ENCODE measurements at regions of chr2 and their contacts with region 1.

Region 1: DNA sequence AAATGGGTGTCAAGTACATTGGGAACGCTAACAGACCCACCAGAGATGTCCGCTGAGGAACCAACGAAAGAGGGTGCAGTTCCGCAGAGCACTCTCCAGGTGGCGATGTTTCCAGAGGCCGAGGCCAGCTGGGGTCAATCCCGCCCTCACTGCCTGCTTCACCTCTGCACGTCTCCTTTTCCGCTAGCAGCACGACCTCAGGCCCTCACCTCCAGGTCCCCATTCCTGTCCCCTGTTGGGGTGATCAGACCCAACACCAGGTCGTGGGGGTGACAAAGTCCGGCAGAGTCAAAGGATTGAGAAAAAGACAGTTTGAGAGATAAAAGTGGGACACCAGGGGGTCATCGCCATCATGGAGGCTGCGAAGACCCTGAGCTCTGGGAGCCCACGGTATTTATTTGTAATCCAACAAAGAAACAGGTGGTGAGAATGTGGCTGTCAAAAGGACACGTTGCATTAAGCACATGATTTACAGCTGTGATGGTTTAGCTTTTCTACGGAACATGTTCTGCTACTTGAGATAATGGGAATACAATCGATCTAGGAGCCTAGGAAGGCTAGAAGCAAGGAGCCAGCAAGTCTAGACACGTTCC is 27.3 kb downstream of the ZAP70 start:
- DNase-seq: peak in 4 of 9 experiments; percentile 37 to 70 (median 54)
- ATAC-seq: peak; percentile 55
- H3K4me3 ChIP-seq: no peak overlapping the region
- H3K4me3 Mint-ChIP-seq: no peak overlapping the region
- H3K27ac ChIP-seq: peak overlapping the region in 1 of 2 experiments; percentile 68
- H3K27ac Mint-ChIP-seq: peak overlapping the region; percentile 77
- H3K4me1 ChIP-seq: peaks cover 36% of the 10 kb centered on the region
- H3K4me1 Mint-ChIP-seq: peaks cover 59% of the 10 kb centered on the region
- H3K27me3 ChIP-seq: no peaks in the 10 kb centered on the region
- H3K27me3 Mint-ChIP-seq: no peaks in the 10 kb centered on the region
- CTCF ChIP-seq: peak; percentile 61

Region 2: GRCh38 chr2:97645695-97646629 is 94.7 kb before region 1 on chr2 and contains the start of gene COX5B:
- CTCF ChIA-PET with region 1: no interaction called
- POLR2A ChIA-PET with region 1: no interaction called
- intact Hi-C with region 1: loop called in 1 of 2 experiments (anchors 5 kb)
- DNase-seq: peak; percentile 97 to 99 (median 99)
- ATAC-seq: peak; percentile 97
- H3K4me3 ChIP-seq: peak within 1 kb of the TSS; percentile 94 to 97
- H3K4me3 Mint-ChIP-seq: peak within 1 kb of the TSS; percentile 91
- H3K27ac ChIP-seq: peak within 1 kb of the TSS; percentile 83 to 90
- H3K27ac Mint-ChIP-seq: peak within 1 kb of the TSS; percentile 95
- H3K4me1 ChIP-seq: peaks cover 20% of the 10 kb centered on the region
- H3K4me1 Mint-ChIP-seq: peaks cover 20% of the 10 kb centered on the region
- H3K27me3 ChIP-seq: no peaks in the 10 kb centered on the region
- H3K27me3 Mint-ChIP-seq: no peaks in the 10 kb centered on the region
- CTCF ChIP-seq: no peak
- total RNA-seq, gene COX5B: 115 to 117 TPM

Region 3: DNA sequence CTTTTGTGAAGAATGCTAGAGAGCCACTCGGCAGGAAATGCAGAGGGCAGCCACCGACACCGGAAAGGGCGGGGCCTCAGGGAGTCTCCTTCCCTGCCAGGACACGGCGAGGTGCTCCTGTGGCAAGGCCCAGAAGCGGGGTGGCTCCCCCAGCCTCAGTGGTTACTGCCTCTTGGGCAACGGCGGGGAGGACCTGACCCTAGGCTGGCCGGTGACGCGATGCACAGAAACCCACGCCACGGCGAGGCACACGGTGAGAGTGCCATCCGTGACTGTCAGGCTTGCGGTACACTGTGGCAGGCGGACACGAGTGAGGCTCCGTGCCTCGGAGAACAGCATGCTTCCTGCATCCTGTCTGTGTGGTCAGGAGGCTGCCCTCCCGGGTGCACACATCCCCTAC is 20.5 kb after region 1 on chr2:
- CTCF ChIA-PET with region 1: interaction called, 11 read pairs
- POLR2A ChIA-PET with region 1: interaction called, 5 read pairs
- intact Hi-C with region 1: no loop called
- DNase-seq: peak; percentile 15 to 79 (median 57)
- ATAC-seq: peak; percentile 69
- H3K4me3 ChIP-seq: peak overlapping the region in 1 of 2 experiments; percentile 18
- H3K4me3 Mint-ChIP-seq: peak overlapping the region; percentile 61
- H3K27ac ChIP-seq: peak overlapping the region; percentile 32 to 40
- H3K27ac Mint-ChIP-seq: peak overlapping the region; percentile 91
- H3K4me1 ChIP-seq: peaks cover 42% of the 10 kb centered on the region
- H3K4me1 Mint-ChIP-seq: peaks cover 29% of the 10 kb centered on the region
- H3K27me3 ChIP-seq: no peaks in the 10 kb centered on the region
- H3K27me3 Mint-ChIP-seq: no peaks in the 10 kb centered on the region
- CTCF ChIP-seq: no peak

Region 4: DNA sequence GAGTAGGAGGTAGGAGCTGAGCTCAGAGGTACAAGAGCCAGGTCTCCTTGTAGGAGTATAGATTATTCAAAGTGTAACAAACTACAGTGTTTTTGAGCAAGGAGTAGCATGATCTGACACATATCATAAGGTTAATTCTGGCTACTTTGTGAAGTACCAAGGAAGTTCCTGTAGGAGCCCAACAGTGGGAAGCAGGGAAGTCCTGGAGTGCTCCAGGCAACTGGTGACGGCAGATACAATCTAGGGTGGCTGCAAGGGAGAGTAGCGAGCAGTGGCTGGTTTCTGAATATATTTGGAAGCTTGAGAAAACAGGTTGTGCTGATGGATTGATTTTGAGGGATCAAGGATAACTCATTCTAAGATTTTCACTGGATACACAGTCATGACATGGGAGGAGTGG is 149.4 kb after region 1 on chr2:
- CTCF ChIA-PET with region 1: no interaction called
- POLR2A ChIA-PET with region 1: no interaction called
- intact Hi-C with region 1: no loop called
- DNase-seq: no peak
- ATAC-seq: no peak
- H3K4me3 ChIP-seq: no peak overlapping the region
- H3K4me3 Mint-ChIP-seq: no peak overlapping the region
- H3K27ac ChIP-seq: no peak overlapping the region
- H3K27ac Mint-ChIP-seq: no peak overlapping the region
- H3K4me1 ChIP-seq: no peaks in the 10 kb centered on the region
- H3K4me1 Mint-ChIP-seq: no peaks in the 10 kb centered on the region
- H3K27me3 ChIP-seq: no peaks in the 10 kb centered on the region
- H3K27me3 Mint-ChIP-seq: no peaks in the 10 kb centered on the region
- CTCF ChIP-seq: no peak